ENCODE measurements at regions of chr18 and their contacts with region 1.

Region 1: DNA sequence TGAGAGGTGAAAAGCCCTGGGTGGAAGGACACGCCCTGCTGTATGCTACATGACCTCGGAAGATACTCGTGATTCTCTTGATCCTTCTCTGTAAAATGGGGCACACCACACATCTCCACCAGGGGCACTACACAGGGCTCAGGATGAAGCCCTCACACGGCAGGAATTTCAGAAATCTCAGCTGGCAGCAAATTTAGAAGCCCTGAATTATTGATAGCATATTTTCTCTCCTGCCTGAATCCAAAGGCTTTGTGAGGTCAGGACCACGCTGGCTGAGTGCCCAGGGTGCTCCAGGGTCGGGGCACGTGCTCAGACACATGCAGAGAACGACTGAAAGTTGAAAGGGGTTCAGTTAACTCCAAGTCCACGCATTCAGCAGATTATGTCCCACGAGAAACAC is 42.1 kb upstream of the GALR1 start:
- DNase-seq: peak; percentile 27
- H3K4me3 ChIP-seq: no peak overlapping the region
- H3K27ac ChIP-seq: peak overlapping the region; percentile 11
- H3K27me3 ChIP-seq: no peaks in the 10 kb centered on the region
- CTCF ChIP-seq: peak; percentile 71

Region 2: GRCh38 chr18:77054606-77055428 is 152.7 kb before region 1 on chr18:
- CTCF ChIA-PET with region 1: interaction called, 17 read pairs
- POLR2A ChIA-PET with region 1: no interaction called
- DNase-seq: peak; percentile 71
- H3K4me3 ChIP-seq: no peak overlapping the region
- H3K27ac ChIP-seq: peak overlapping the region; percentile 70
- H3K27me3 ChIP-seq: no peaks in the 10 kb centered on the region
- CTCF ChIP-seq: peak; percentile 92

Region 3: GRCh38 chr18:77067291-77068061 is 140.1 kb before region 1 on chr18:
- CTCF ChIA-PET with region 1: interaction called, 15 read pairs
- POLR2A ChIA-PET with region 1: no interaction called
- DNase-seq: peak; percentile 64
- H3K4me3 ChIP-seq: no peak overlapping the region
- H3K27ac ChIP-seq: peak overlapping the region; percentile 78
- H3K27me3 ChIP-seq: no peaks in the 10 kb centered on the region
- CTCF ChIP-seq: 0 out of 2 replicates have a peak, but pooled peaks have one; percentile 17

Region 4: GRCh38 chr18:77191071-77191751 is 16.3 kb before region 1 on chr18:
- CTCF ChIA-PET with region 1: interaction called, 16 read pairs
- POLR2A ChIA-PET with region 1: no interaction called
- DNase-seq: peak; percentile 53
- H3K4me3 ChIP-seq: no peak overlapping the region
- H3K27ac ChIP-seq: no peak overlapping the region
- H3K27me3 ChIP-seq: peaks cover 10% of the 10 kb centered on the region
- CTCF ChIP-seq: no peak